Naive thymus-derived CD4-positive, alpha-beta T cell (primary cell): ENCODE measurements at regions of chr16 and their contacts with region 1.

Region 1: GRCh38 chr16:88650749-88651275 is at the start of gene CYBA:
- DNase-seq: peak; percentile 54 to 88 (median 68)
- ATAC-seq: peak; percentile 92
- H3K4me3 ChIP-seq: peak within 1 kb of the TSS; percentile 78
- H3K4me3 Mint-ChIP-seq: peak within 1 kb of the TSS; percentile 84 to 93 (median 90)
- H3K27ac ChIP-seq: peak within 1 kb of the TSS; percentile 84
- H3K27ac Mint-ChIP-seq: peak within 1 kb of the TSS; percentile 82 to 98 (median 91)
- H3K4me1 ChIP-seq: peaks cover 20 to 28% of the 10 kb centered on the region in 2 donors
- H3K4me1 Mint-ChIP-seq: peaks cover 6 to 27% (median 13%) of the 10 kb centered on the region in 7 donors
- H3K27me3 ChIP-seq: no peaks in the 10 kb centered on the region
- H3K27me3 Mint-ChIP-seq: no peaks in the 10 kb centered on the region
- total RNA-seq, gene CYBA: 240 to 498 (median 281) TPM

Region 2: DNA sequence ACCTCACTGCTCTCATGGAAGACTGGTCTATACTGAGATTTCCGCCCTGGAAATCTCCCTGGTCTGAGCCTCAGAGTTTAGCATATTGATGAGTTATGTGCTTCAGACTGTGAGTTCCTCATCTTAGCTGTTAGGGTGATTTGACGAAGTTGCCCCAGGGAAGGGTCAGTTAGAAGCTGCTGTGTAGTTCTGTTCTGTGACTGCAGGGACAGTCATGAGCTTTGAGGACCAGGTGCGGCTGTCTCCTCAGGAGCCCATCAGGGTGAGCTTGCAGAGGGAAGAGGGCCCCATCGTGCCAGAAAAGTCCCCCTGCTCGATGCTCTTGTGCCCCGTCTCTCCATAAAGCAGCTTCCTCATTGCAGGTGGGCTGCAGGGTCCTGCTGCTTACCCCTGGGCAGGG is 40.7 kb before region 1 on chr16:
- CTCF ChIA-PET with region 1: no interaction called
- POLR2A ChIA-PET with region 1: no interaction called
- intact Hi-C with region 1: no loop called
- DNase-seq: no peak
- ATAC-seq: no peak
- H3K4me3 ChIP-seq: no peak overlapping the region
- H3K4me3 Mint-ChIP-seq: no peak overlapping the region
- H3K27ac ChIP-seq: no peak overlapping the region
- H3K27ac Mint-ChIP-seq: no peak overlapping the region
- H3K4me1 ChIP-seq: no peaks in the 10 kb centered on the region
- H3K4me1 Mint-ChIP-seq: peaks cover 0 to 23% (median 14%) of the 10 kb centered on the region in 7 donors
- H3K27me3 ChIP-seq: no peaks in the 10 kb centered on the region
- H3K27me3 Mint-ChIP-seq: no peaks in the 10 kb centered on the region

Region 3: GRCh38 chr16:88619859-88620815 is 30.7 kb before region 1 on chr16:
- CTCF ChIA-PET with region 1: no interaction called
- POLR2A ChIA-PET with region 1: interaction called, 3 read pairs
- intact Hi-C with region 1: loop called in 1 of 2 experiments (anchors 1 kb)
- DNase-seq: peak in 4 of 9 donors; percentile 24 to 43 (median 41)
- ATAC-seq: peak; percentile 88
- H3K4me3 ChIP-seq: no peak overlapping the region
- H3K4me3 Mint-ChIP-seq: peak overlapping the region in 3 of 10 donors; percentile 9 to 68 (median 25)
- H3K27ac ChIP-seq: peak overlapping the region; percentile 23
- H3K27ac Mint-ChIP-seq: peak overlapping the region; percentile 41 to 93 (median 75)
- H3K4me1 ChIP-seq: peaks cover 0 to 35% of the 10 kb centered on the region in 2 donors
- H3K4me1 Mint-ChIP-seq: peaks cover 5 to 34% (median 20%) of the 10 kb centered on the region in 7 donors
- H3K27me3 ChIP-seq: no peaks in the 10 kb centered on the region
- H3K27me3 Mint-ChIP-seq: no peaks in the 10 kb centered on the region

Region 4: GRCh38 chr16:88639231-88640038 is 11.4 kb before region 1 on chr16:
- CTCF ChIA-PET with region 1: interaction called, 3 read pairs
- POLR2A ChIA-PET with region 1: interaction called, 11 read pairs
- intact Hi-C with region 1: loop called (anchors 1 to 2 kb)
- DNase-seq: no peak
- ATAC-seq: no peak
- H3K4me3 ChIP-seq: no peak overlapping the region
- H3K4me3 Mint-ChIP-seq: peak overlapping the region in 3 of 10 donors; percentile 43 to 63 (median 56)
- H3K27ac ChIP-seq: no peak overlapping the region
- H3K27ac Mint-ChIP-seq: no peak overlapping the region
- H3K4me1 ChIP-seq: peaks cover 21 to 27% of the 10 kb centered on the region in 2 donors
- H3K4me1 Mint-ChIP-seq: peaks cover 27 to 50% (median 33%) of the 10 kb centered on the region in 7 donors
- H3K27me3 ChIP-seq: peaks cover 0 to 6% of the 10 kb centered on the region in 2 donors
- H3K27me3 Mint-ChIP-seq: peaks cover 0 to 42% (median 13%) of the 10 kb centered on the region in 5 donors

Region 5: DNA sequence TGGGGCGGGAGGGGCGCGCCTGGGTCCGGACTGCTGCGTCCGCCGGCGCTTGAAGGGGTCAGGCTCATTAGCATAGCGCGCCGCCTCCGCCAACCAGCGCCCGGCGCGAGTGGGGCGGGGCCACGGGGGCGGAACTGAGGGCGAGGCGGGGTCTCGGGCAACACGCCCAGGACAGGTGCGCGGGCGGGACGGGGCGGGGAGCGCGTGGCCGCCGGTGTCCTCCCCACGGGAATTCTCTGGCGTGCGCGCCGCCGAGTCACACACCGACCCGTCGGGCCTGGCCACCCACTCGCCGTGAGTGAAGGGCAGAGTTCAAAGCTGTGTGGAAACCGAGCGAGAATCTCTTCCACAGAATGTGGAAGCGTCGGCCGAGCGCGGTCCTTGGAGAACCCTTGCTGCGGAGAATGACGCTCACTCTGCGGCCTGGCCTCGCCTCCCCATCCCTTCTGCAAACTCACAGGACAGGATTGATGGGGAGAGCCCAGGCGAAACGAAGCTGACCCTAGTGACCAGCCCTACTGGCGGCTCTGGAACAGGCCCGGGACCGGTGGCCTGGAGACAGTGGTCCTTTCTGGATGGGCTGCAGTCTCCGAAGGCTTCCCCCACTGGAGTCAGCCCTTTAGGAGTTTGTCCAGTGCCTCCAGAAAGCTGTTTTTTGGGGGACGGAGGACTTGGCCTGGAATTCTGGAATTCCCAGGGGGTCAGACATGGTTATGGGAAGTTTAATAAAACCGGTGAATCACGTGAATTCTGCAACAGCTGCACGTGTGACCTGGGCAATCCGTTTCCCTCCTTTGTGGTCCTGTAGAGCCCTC is 35.8 kb after region 1 on chr16 and contains the start of gene SNAI3:
- CTCF ChIA-PET with region 1: interaction called, 3 read pairs
- POLR2A ChIA-PET with region 1: interaction called, 5 read pairs
- intact Hi-C with region 1: loop called (anchors 1 kb)
- DNase-seq: peak; percentile 69 to 96 (median 80)
- ATAC-seq: peak; percentile 91
- H3K4me3 ChIP-seq: peak within 1 kb of the TSS; percentile 85
- H3K4me3 Mint-ChIP-seq: peak within 1 kb of the TSS; percentile 72 to 87 (median 81)
- H3K27ac ChIP-seq: peak within 1 kb of the TSS; percentile 77
- H3K27ac Mint-ChIP-seq: peak within 1 kb of the TSS in 8 of 9 donors; percentile 6 to 81 (median 63)
- H3K4me1 ChIP-seq: peaks cover 21 to 48% of the 10 kb centered on the region in 2 donors
- H3K4me1 Mint-ChIP-seq: peaks cover 23 to 76% (median 59%) of the 10 kb centered on the region in 7 donors
- H3K27me3 ChIP-seq: no peaks in the 10 kb centered on the region
- H3K27me3 Mint-ChIP-seq: no peaks in the 10 kb centered on the region
- total RNA-seq, gene SNAI3: 2.7 to 13.0 (median 6.1) TPM

Region 6: GRCh38 chr16:88811769-88812512 is 161.1 kb after region 1 on chr16 and contains the start of gene APRT:
- CTCF ChIA-PET with region 1: no interaction called
- POLR2A ChIA-PET with region 1: no interaction called
- intact Hi-C with region 1: loop called in 1 of 2 experiments (anchors 1 kb)
- DNase-seq: peak; percentile 92 to 100 (median 98)
- ATAC-seq: peak; percentile 95
- H3K4me3 ChIP-seq: peak within 1 kb of the TSS; percentile 97
- H3K4me3 Mint-ChIP-seq: peak within 1 kb of the TSS; percentile 92 to 99 (median 96)
- H3K27ac ChIP-seq: peak within 1 kb of the TSS; percentile 84
- H3K27ac Mint-ChIP-seq: peak within 1 kb of the TSS; percentile 79 to 98 (median 95)
- H3K4me1 ChIP-seq: peaks cover 8 to 11% of the 10 kb centered on the region in 2 donors
- H3K4me1 Mint-ChIP-seq: peaks cover 0 to 26% (median 12%) of the 10 kb centered on the region in 7 donors
- H3K27me3 ChIP-seq: no peaks in the 10 kb centered on the region
- H3K27me3 Mint-ChIP-seq: no peaks in the 10 kb centered on the region
- total RNA-seq, gene APRT: 134 to 178 (median 161) TPM

Region 7: GRCh38 chr16:88831838-88832237 is 181.0 kb after region 1 on chr16:
- CTCF ChIA-PET with region 1: no interaction called
- POLR2A ChIA-PET with region 1: no interaction called
- intact Hi-C with region 1: no loop called
- DNase-seq: no peak
- ATAC-seq: no peak
- H3K4me3 ChIP-seq: no peak overlapping the region
- H3K4me3 Mint-ChIP-seq: no peak overlapping the region
- H3K27ac ChIP-seq: no peak overlapping the region
- H3K27ac Mint-ChIP-seq: no peak overlapping the region
- H3K4me1 ChIP-seq: no peaks in the 10 kb centered on the region
- H3K4me1 Mint-ChIP-seq: no peaks in the 10 kb centered on the region
- H3K27me3 ChIP-seq: no peaks in the 10 kb centered on the region
- H3K27me3 Mint-ChIP-seq: no peaks in the 10 kb centered on the region